ENCODE measurements at regions of chr1 and their contacts with region 1.

Region 1: GRCh38 chr1:110766025-110766647 is 91.4 kb upstream of the KCNA3 start:
- DNase-seq: peak; percentile 72
- ATAC-seq: peak; percentile 70
- H3K4me3 Mint-ChIP-seq: peak overlapping the region; percentile 5
- H3K27ac Mint-ChIP-seq: no peak overlapping the region
- H3K4me1 Mint-ChIP-seq: peaks cover 5% of the 10 kb centered on the region
- H3K27me3 Mint-ChIP-seq: peaks cover 6% of the 10 kb centered on the region

Region 2: DNA sequence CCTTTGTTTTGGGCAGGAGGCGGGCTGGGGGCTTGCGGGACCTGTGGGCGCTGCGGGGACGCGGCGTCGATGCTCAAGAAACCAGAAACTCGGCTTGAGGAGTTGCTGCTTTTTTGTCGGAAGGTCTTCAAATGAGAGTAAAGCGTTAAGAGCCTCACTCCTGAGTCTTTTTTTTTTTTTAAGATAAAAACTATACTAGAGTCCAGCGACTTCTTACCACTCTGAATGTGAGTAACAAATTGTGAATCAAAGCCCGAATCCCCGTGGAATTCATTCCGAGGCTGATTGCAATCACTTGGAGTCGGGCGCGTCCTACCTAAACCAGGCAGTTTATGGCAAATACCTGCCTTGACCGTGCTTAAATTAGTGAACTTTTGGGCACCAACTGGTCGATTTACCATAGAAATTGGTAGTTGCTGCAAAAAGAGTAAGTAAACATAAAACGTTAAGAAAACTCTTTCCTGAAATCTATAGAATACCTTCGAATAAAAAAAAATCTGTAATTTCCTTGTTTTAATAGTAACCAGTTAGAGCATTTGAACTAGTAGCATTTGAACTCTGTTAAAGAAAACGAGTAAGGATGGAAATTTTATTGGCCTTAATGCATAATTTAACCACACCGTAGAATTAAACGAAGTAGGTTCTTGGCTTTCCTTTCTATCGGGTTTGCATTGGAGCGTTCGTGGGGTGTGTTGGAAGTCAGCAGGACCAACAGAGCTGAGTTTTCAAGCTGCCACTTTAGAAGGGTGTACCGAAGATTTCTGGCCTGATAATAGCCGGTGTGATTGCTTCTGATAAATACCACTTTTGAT is 1888.6 kb before region 1 on chr1:
- CTCF ChIA-PET with region 1: no interaction called
- POLR2A ChIA-PET with region 1: no interaction called
- intact Hi-C with region 1: no loop called
- DNase-seq: no peak
- ATAC-seq: peak; percentile 2
- H3K4me3 Mint-ChIP-seq: peak overlapping the region; percentile 91
- H3K27ac Mint-ChIP-seq: peak overlapping the region; percentile 78
- H3K4me1 Mint-ChIP-seq: peaks cover 5% of the 10 kb centered on the region
- H3K27me3 Mint-ChIP-seq: peaks cover 5% of the 10 kb centered on the region

Region 3: DNA sequence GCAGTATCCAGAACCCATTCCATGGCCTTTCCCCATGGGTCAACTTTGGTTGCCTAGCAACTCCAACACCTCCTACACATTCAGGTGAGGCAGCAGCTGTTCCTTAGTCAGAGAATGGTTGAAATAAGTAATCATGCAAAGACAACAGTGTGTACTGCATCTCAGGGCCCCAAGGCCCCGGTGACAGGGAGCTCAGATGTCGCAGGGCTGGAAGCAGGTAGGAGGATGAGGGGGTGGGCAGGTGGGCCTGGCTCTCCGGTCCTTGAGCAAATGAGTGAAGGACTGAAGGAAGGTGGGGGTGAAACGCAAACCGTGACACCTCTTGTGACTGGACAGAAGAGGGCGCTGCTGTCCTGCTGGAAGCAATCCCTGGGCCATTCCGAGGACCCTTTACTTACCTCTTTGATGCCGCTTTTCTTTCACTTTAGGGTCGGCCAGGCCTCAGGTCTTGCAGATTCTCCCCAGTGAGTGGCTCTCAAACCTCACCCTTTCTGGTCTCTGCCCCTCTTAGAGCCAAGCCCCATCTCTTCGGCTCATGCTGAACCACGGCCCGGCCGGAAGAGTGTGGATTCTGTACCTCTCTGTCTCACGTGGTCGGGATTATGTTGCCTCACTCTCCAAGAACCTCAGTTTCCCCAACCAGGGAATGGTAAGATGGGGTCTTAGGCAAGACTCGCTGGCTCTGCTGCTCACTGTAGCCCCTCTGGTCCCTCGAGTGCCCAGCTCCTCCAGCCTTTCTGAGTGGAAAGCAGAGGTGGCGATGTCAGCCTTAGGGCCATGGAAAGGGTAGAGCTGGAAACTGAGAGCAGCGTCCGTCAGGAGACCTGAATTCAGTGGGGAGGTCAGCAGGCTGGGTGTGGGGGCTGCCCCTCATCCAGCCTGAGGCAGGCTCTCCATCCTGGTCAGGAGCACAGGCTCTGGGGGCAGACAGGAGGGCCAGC is 241.6 kb before region 1 on chr1:
- CTCF ChIA-PET with region 1: interaction called, 12 read pairs
- POLR2A ChIA-PET with region 1: no interaction called
- intact Hi-C with region 1: loop called in 1 of 2 experiments (anchors 1 kb)
- DNase-seq: peak; percentile 75
- ATAC-seq: peak; percentile 88
- H3K4me3 Mint-ChIP-seq: no peak overlapping the region
- H3K27ac Mint-ChIP-seq: no peak overlapping the region
- H3K4me1 Mint-ChIP-seq: peaks cover 2% of the 10 kb centered on the region
- H3K27me3 Mint-ChIP-seq: peaks cover 25% of the 10 kb centered on the region

Region 4: DNA sequence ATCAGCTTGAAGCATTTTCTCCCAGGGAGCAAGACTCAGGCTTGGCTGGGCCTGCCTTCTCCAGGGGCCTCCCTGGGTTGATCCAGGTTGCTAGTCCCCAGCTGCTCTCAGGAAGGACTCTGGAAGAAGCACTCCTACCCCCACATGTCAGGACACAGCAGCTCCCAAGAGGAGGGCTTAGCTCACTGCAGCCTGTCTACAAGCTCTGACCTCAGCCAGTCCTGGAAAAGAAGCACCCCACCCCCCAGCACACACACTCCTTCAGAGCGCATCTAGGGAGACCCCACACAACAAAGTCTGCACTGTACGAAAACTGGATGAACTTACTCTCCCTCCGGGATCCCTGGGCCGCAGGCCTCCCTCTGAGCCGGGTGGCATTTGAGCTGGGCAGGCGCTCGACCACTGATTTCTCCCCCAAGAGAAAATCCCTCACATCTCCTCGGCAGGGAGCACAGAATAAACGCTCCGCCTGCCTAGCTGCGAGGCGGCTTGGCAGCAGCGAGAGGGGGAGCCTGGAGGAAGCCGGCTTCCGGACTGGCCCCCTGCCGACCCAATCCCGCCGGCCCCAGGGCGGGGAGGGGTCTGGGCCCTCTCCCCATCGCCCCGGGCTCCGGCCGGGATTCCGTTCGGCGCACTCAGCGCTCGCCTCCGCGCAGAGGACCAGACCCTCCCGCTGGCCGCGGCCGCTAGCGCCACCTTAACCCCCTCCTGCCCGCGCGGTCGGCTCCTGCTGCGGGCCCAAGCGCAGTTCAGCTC is 160.1 kb before region 1 on chr1 and contains the start of gene KCNA2:
- CTCF ChIA-PET with region 1: interaction called, 27 read pairs
- POLR2A ChIA-PET with region 1: no interaction called
- intact Hi-C with region 1: no loop called
- DNase-seq: peak; percentile 24
- ATAC-seq: peak; percentile 7
- H3K4me3 Mint-ChIP-seq: peak within 1 kb of the TSS; percentile 68
- H3K27ac Mint-ChIP-seq: no peak within 1 kb of the TSS
- H3K4me1 Mint-ChIP-seq: peaks cover 8% of the 10 kb centered on the region
- H3K27me3 Mint-ChIP-seq: peaks cover 48% of the 10 kb centered on the region
- total RNA-seq, gene KCNA2: 0.25 to 0.37 TPM

Region 5: DNA sequence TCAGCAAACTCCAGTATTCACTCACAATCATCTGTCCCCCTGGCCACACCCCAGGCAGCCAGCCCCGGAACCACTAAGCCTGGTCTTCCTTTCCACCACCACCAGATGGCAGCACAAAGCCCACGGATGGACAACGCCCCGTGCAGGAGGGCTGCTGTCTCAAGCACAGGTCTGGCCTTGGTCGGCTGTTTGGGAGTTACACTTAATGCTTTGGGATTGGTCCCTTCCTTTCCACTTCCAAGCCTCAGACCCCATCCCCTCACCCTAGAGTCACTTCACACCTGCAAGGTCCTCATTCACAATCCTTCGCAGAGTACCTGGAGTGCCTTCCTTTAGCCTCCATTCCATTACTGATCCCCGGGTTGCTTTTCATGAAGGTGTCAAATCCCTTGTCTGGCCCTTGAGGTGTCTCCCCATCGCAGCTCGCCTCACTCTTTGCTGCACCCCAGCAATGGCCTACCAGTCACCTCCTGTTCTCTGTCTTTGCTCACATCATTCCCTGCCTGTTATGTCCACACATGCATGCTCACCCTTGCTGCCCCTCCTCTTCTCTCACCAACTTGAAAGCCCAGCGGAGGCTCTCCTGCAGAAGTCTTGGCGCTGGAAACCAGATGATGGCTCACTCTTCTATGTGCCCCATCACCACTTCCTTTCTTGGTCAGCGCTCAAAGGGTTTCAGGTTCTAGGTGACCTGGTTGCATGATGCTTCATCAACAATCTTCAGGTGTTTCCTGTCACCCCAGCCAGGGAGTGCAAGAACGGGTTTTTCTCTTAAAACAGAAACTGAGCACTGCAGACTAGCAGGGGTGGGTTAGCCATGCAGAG is 135.1 kb before region 1 on chr1:
- CTCF ChIA-PET with region 1: interaction called, 69 read pairs
- POLR2A ChIA-PET with region 1: interaction called, 6 read pairs
- intact Hi-C with region 1: loop called (anchors 1 kb)
- DNase-seq: peak; percentile 93
- ATAC-seq: peak; percentile 76
- H3K4me3 Mint-ChIP-seq: no peak overlapping the region
- H3K27ac Mint-ChIP-seq: no peak overlapping the region
- H3K4me1 Mint-ChIP-seq: peaks cover 55% of the 10 kb centered on the region
- H3K27me3 Mint-ChIP-seq: no peaks in the 10 kb centered on the region

Region 6: DNA sequence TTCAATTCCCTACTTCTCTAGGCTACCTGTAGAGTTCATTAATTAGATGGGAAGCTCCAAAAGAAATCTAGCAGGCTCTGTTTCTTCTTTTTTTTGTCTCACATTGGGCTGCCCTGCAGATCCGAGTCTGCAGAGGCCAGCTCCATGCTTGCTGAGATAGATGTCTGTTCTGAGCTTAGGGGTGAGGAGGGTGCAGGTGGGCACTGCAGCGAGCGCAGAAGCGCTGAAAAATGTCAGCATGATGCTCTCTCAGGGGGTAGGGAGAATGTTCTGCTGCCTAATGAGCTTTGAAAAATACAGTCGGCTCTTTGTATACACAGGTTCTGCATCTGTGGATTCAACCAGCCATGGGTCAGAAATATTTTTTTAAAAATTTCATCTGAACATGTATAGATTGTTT is 34.6 kb before region 1 on chr1:
- CTCF ChIA-PET with region 1: interaction called, 11 read pairs
- POLR2A ChIA-PET with region 1: no interaction called
- intact Hi-C with region 1: no loop called
- DNase-seq: no peak
- ATAC-seq: no peak
- H3K4me3 Mint-ChIP-seq: no peak overlapping the region
- H3K27ac Mint-ChIP-seq: no peak overlapping the region
- H3K4me1 Mint-ChIP-seq: peaks cover 19% of the 10 kb centered on the region
- H3K27me3 Mint-ChIP-seq: no peaks in the 10 kb centered on the region

Region 7: DNA sequence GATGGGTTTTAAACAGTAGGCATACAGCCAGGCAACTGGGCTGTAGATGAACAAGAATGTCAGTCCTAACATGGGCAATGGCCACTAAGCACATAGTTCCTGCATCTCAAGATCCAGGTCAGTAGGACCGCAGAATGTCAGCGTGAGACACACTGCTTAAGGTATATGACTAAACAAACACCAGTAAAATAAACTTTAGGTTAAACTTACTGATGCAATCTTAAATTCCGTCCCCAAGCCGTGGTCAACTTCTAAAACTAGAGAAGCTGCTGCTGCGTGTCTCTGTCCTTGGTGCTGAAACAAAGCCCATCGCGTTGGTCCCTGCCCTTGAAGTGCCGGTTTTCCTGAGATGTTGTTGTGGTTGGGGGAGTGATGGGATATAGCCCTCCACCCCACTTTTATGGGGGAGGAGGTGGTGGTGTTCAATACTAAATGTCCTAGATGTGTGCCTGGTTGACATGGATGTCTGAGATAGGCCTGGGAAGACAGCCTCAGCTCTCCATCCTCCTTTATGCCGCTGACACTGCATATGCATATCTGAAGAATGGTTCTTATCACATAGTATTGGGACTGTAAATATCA is 19.5 kb before region 1 on chr1:
- CTCF ChIA-PET with region 1: interaction called, 25 read pairs
- POLR2A ChIA-PET with region 1: no interaction called
- intact Hi-C with region 1: no loop called
- DNase-seq: peak; percentile 79
- ATAC-seq: peak; percentile 23
- H3K4me3 Mint-ChIP-seq: no peak overlapping the region
- H3K27ac Mint-ChIP-seq: no peak overlapping the region
- H3K4me1 Mint-ChIP-seq: no peaks in the 10 kb centered on the region
- H3K27me3 Mint-ChIP-seq: peaks cover 12% of the 10 kb centered on the region

Region 8: DNA sequence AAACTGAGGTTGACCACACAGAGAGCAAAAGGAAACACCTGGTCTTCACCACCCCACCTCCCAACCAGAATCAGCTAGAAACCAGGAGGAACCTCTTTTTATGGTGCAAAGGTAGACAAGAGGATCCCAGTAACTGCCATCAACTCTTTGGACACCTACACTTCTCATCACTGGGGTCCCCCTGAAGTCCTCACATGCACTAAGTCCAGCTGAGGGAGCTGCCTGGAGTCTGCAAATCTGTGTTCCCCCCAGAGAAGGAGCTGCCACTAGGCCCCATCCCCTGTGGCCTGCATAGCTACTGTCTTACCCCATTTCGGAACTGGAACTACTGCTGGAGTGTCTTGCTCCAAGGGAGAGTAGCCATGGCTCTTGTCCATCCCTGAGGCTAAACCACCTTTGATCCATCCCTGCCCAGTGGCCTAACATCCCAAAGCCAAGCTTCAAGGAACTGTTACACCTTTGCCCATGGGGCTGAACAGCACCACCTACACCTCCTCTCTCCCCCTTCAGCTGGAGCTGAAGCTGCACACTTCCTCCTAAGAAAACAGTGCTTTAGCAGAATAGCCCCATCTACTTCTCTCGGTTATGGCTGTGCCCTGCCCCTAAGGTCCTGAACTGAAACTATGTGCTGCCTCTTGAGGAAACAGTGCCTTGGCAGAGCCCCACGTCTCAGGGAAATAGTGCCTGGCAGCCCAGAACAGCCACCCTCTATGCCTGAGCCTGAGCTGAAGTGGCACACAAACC is 21.4 kb after region 1 on chr1:
- CTCF ChIA-PET with region 1: interaction called, 90 read pairs
- POLR2A ChIA-PET with region 1: no interaction called
- intact Hi-C with region 1: no loop called
- DNase-seq: peak; percentile 33
- ATAC-seq: peak; percentile 35
- H3K4me3 Mint-ChIP-seq: peak overlapping the region; percentile 9
- H3K27ac Mint-ChIP-seq: peak overlapping the region; percentile 87
- H3K4me1 Mint-ChIP-seq: peaks cover 60% of the 10 kb centered on the region
- H3K27me3 Mint-ChIP-seq: no peaks in the 10 kb centered on the region